Activated naive CD4-positive, alpha-beta T cell treated with anti-CD3 and anti-CD28 coated beads for 36 hours (primary cell): ENCODE measurements at regions of chr1 and their contacts with region 1.

Region 1: GRCh38 chr1:227437495-227438008 is 119.3 kb upstream of the CDC42BPA start:
- DNase-seq: no peak
- H3K4me3 Mint-ChIP-seq: no peak overlapping the region
- H3K27ac Mint-ChIP-seq: no peak overlapping the region
- H3K4me1 Mint-ChIP-seq: peaks cover 4% of the 10 kb centered on the region
- H3K27me3 Mint-ChIP-seq: peaks cover 28% of the 10 kb centered on the region

Region 2: GRCh38 chr1:226547754-226548191 is 889.8 kb before region 1 on chr1:
- CTCF ChIA-PET with region 1: interaction called, 3 read pairs
- intact Hi-C with region 1: loop called (anchors 5 kb)
- DNase-seq: peak; percentile 82
- H3K4me3 Mint-ChIP-seq: no peak overlapping the region
- H3K27ac Mint-ChIP-seq: no peak overlapping the region
- H3K4me1 Mint-ChIP-seq: peaks cover 10% of the 10 kb centered on the region
- H3K27me3 Mint-ChIP-seq: peaks cover 33% of the 10 kb centered on the region

Region 3: DNA sequence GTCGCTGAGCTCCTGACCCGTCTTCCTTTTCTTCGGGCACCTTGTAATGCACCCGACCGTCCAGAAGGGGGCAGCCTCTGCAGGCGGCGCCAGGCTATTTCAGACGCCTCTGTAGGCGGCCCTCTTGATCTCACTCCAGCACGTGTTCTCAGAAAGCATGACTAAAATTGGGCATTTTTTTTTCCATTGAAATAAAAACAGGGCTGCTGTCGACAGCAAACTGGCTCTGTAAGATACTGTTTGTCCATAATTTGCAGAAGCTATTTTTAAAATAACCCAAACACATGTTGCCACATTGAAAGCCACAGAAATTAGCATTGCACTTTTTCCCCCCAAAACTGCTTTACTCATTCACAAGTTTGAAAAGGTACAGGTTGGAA is 811.0 kb before region 1 on chr1:
- CTCF ChIA-PET with region 1: no interaction called
- intact Hi-C with region 1: loop called (anchors 1 kb)
- DNase-seq: peak; percentile 90
- H3K4me3 Mint-ChIP-seq: peak overlapping the region; percentile 10
- H3K27ac Mint-ChIP-seq: peak overlapping the region; percentile 68
- H3K4me1 Mint-ChIP-seq: peaks cover 25% of the 10 kb centered on the region
- H3K27me3 Mint-ChIP-seq: no peaks in the 10 kb centered on the region

Region 4: GRCh38 chr1:226912587-226913176 is 524.9 kb before region 1 on chr1:
- CTCF ChIA-PET with region 1: interaction called, 3 read pairs
- intact Hi-C with region 1: loop called (anchors 1 kb)
- DNase-seq: peak; percentile 71
- H3K4me3 Mint-ChIP-seq: no peak overlapping the region
- H3K27ac Mint-ChIP-seq: no peak overlapping the region
- H3K4me1 Mint-ChIP-seq: no peaks in the 10 kb centered on the region
- H3K27me3 Mint-ChIP-seq: peaks cover 4% of the 10 kb centered on the region

Region 5: GRCh38 chr1:227134686-227135314 is 302.8 kb before region 1 on chr1:
- CTCF ChIA-PET with region 1: no interaction called
- intact Hi-C with region 1: no loop called
- DNase-seq: no peak
- H3K4me3 Mint-ChIP-seq: no peak overlapping the region
- H3K27ac Mint-ChIP-seq: no peak overlapping the region
- H3K4me1 Mint-ChIP-seq: no peaks in the 10 kb centered on the region
- H3K27me3 Mint-ChIP-seq: peaks cover 6% of the 10 kb centered on the region

Region 6: GRCh38 chr1:227234998-227235405 is 202.6 kb before region 1 on chr1:
- CTCF ChIA-PET with region 1: no interaction called
- intact Hi-C with region 1: loop called (anchors 1 kb)
- DNase-seq: peak; percentile 27
- H3K4me3 Mint-ChIP-seq: no peak overlapping the region
- H3K27ac Mint-ChIP-seq: no peak overlapping the region
- H3K4me1 Mint-ChIP-seq: no peaks in the 10 kb centered on the region
- H3K27me3 Mint-ChIP-seq: peaks cover 21% of the 10 kb centered on the region

Region 7: GRCh38 chr1:227449051-227449450 is 11.5 kb after region 1 on chr1:
- CTCF ChIA-PET with region 1: interaction called, 10 read pairs
- intact Hi-C with region 1: no loop called
- DNase-seq: peak; percentile 53
- H3K4me3 Mint-ChIP-seq: no peak overlapping the region
- H3K27ac Mint-ChIP-seq: no peak overlapping the region
- H3K4me1 Mint-ChIP-seq: no peaks in the 10 kb centered on the region
- H3K27me3 Mint-ChIP-seq: peaks cover 41% of the 10 kb centered on the region